ENCODE measurements at regions of chr17 and their contacts with region 1.

Region 1: DNA sequence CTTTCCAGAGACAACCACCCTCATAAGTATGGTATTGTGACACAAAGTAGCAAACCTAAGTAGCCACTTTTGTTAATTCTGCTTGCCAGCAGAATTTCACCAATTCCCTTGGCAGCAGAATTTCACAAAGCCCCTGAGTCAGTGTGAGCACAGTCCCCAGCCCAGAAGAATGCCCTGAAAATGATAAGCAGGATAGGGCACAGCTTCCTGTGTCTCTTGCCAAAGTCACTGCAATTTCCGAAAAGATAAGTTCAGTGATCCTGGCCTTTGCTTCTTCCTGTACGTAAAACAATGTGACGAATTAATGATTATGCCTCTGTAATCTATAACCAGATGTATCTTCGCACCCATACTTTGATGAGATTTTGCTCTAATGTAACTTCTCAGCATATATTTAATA is 16.0 kb upstream of the WIPF2 start:
- DNase-seq: no peak
- H3K4me3 ChIP-seq: no peak overlapping the region
- H3K27ac ChIP-seq: no peak overlapping the region
- H3K4me1 ChIP-seq: no peaks in the 10 kb centered on the region
- H3K27me3 ChIP-seq: no peaks in the 10 kb centered on the region
- CTCF ChIP-seq: no peak
- EP300 ChIP-seq: no peak
- RAD21 ChIP-seq: no peak

Region 2: GRCh38 chr17:40005520-40005919 is 197.6 kb before region 1 on chr17:
- CTCF ChIA-PET with region 1: no interaction called
- POLR2A ChIA-PET with region 1: no interaction called
- DNase-seq: no peak
- H3K4me3 ChIP-seq: no peak overlapping the region
- H3K27ac ChIP-seq: no peak overlapping the region
- H3K4me1 ChIP-seq: no peaks in the 10 kb centered on the region
- H3K27me3 ChIP-seq: no peaks in the 10 kb centered on the region
- CTCF ChIP-seq: no peak
- EP300 ChIP-seq: no peak
- RAD21 ChIP-seq: no peak

Region 3: DNA sequence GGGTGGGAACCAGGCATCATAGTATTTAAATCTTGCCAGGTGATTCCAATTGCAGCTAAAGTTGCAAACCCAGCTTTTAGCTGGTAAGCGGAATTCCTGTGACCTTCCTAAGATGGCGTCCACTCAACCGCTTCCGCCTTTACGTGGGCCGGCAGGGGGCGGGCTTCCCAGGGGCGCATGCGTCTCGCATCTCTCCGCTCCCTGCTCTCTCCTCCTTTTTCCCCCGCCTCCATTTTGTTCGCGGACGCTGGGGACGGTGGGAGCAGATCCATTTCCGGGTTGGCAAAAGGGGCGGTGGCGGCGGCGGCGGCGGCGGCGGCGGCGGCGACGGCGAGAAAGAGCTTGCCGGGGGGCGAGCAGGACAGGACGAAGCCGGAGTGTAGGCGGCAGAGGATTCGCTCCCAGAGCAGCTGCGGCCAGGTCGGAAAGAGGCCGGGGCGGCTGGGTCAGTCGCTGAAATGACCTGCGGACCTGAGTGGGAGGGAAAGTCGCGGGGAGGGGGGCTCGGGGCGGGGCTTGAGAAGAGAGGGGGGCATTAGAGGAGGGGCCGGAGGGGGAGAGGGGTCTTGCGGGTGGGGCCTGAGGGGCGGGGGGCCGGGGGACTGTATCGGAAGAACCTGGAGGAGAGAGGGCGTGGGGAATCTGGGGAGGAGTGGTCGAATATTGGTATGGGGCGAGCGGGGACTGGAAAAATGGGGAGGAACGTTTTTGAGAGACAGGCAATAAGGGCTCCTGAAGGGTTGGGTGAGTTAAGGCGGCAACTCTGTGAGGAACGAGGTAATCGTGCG is 16.1 kb after region 1 on chr17 and contains the start of gene WIPF2:
- CTCF ChIA-PET with region 1: interaction called, 17 read pairs
- POLR2A ChIA-PET with region 1: interaction called, 7 read pairs
- DNase-seq: peak; percentile 95
- H3K4me3 ChIP-seq: peak within 1 kb of the TSS; percentile 65 to 100
- H3K27ac ChIP-seq: peak within 1 kb of the TSS; percentile 90 to 94
- H3K4me1 ChIP-seq: peaks cover 0 to 4% of the 10 kb centered on the region in 2 experiments; a peak in 1 of 4 replicates
- H3K27me3 ChIP-seq: no peaks in the 10 kb centered on the region
- CTCF ChIP-seq: peak; percentile 56
- EP300 ChIP-seq: peak in 1 of 2 experiments; percentile 56; a peak in 1 of 4 replicates
- RAD21 ChIP-seq: no peak
- polyA plus RNA-seq, gene WIPF2: 5.9 and 6.8 TPM in 2 replicates

Region 4: DNA sequence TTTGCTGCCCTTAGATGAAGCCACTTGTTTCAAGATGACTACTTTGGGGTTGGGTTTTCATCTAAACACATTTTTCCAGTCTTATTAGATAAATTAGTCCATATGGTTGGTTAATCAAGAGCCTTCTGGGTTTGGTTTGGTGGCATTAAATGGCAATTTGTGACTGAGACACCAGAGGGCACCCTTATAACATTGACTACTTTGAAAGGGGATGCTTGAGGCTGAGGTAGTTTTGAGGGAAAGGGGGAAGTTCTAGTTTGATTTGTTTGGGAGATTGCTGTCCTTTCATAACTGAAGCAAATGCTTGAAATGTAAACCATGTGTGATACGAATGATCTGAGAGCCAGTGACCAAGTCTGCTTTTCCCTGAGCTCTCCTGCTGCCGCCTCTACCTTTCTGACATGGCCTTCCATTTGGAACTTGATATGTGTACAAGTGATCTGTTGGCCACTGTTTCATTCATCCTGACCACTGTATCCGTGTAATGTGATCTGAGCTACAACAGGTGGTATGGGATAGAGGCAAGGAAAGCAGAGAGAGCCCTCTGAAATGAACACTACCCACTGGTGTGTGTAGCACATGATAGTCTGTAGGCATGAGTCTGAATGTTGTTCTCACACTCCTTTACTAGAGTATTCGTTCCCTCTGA is 100.0 kb after region 1 on chr17:
- CTCF ChIA-PET with region 1: interaction called, 13 read pairs
- POLR2A ChIA-PET with region 1: no interaction called
- DNase-seq: peak; percentile 63
- H3K4me3 ChIP-seq: no peak overlapping the region; a peak in 1 of 4 replicates
- H3K27ac ChIP-seq: peak overlapping the region; percentile 82 to 99
- H3K4me1 ChIP-seq: peaks cover 48 to 53% of the 10 kb centered on the region in 2 experiments
- H3K27me3 ChIP-seq: no peaks in the 10 kb centered on the region
- CTCF ChIP-seq: peak; percentile 86
- EP300 ChIP-seq: 0 out of 4 replicates have a peak, but pooled peaks of 1 of the 2 experiments have one; percentile 45
- RAD21 ChIP-seq: peak; percentile 96

Measured in SK-N-SH (cell line).